A549 (cell line): ENCODE measurements at regions of chr11 and their contacts with region 1.

Region 1: GRCh38 chr11:61516675-61517572 is 8.4 kb downstream of the LRRC10B start:
- DNase-seq: peak; percentile 28 to 86
- ATAC-seq: peak in 1 of 2 experiments; percentile 81; a peak in 3 of 6 replicates
- H3K4me3 ChIP-seq: no peak overlapping the region
- H3K27ac ChIP-seq: no peak overlapping the region
- H3K4me1 ChIP-seq: peaks cover 6% of the 10 kb centered on the region; the same call in 1 of the 3 replicates
- CTCF ChIP-seq: peak; percentile 93
- EP300 ChIP-seq: no peak
- POLR2A ChIP-seq: no peak
- RAD21 ChIP-seq: peak; percentile 83 to 86

Region 2: GRCh38 chr11:61446211-61446651 is 70.7 kb before region 1 on chr11:
- CTCF ChIA-PET with region 1: interaction called, 128 read pairs
- POLR2A ChIA-PET with region 1: no interaction called
- DNase-seq: peak; percentile 90
- ATAC-seq: peak; percentile 98 to 99
- H3K4me3 ChIP-seq: no peak overlapping the region
- H3K27ac ChIP-seq: peak overlapping the region; percentile 44 to 79; a peak in 5 of 6 replicates
- H3K4me1 ChIP-seq: peaks cover 12% of the 10 kb centered on the region
- CTCF ChIP-seq: peak; percentile 91
- EP300 ChIP-seq: no peak
- POLR2A ChIP-seq: no peak
- RAD21 ChIP-seq: peak; percentile 71 to 77

Region 3: DNA sequence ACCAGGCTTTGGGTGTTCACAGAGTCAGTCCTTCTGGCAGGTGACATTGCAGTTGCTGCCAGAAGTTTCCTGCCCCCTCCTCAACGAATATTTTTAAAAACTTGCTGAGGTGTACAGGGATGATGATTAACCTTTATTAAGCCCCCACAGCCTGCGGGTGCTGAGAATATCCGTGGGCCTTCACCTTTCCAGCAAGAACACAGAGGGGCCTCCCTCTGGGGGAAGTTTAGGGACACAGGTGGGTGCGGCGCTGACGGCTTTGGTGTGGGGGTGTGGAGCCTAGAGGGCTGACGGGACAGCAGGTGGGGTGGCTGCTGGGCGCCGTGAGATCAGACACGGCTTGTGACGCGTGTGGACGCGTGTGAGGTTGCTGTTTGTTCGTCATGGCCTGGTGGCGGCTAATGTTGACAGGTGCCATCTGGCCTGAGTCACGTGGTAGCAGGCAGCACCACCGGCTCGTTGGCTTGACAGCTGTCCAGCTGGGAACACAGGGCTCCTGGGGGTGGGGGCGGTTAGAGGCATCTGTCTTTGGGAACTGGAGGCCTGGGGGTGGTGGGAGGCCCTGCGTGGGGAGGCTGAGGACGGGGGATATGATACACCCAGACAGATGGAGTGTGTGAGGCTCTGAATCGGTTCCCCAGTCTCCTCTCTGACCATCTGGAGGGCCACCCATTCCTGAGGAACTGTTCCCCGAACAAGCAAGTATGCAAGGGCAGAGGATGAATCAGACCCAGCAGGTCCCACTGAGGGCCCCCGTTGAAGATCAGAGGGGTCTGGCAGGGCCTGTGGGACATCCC is 20.9 kb before region 1 on chr11:
- CTCF ChIA-PET with region 1: interaction called, 109 read pairs
- POLR2A ChIA-PET with region 1: no interaction called
- DNase-seq: no peak
- ATAC-seq: no peak
- H3K4me3 ChIP-seq: no peak overlapping the region
- H3K27ac ChIP-seq: no peak overlapping the region
- H3K4me1 ChIP-seq: no peaks in the 10 kb centered on the region
- CTCF ChIP-seq: no peak
- EP300 ChIP-seq: no peak
- POLR2A ChIP-seq: no peak
- RAD21 ChIP-seq: no peak

Region 4: GRCh38 chr11:61541598-61541997 is 24.7 kb after region 1 on chr11:
- CTCF ChIA-PET with region 1: interaction called, 21 read pairs
- POLR2A ChIA-PET with region 1: no interaction called
- DNase-seq: peak; percentile 26 to 36
- ATAC-seq: peak; percentile 16 to 52; a peak in 3 of 6 replicates
- H3K4me3 ChIP-seq: no peak overlapping the region
- H3K27ac ChIP-seq: peak overlapping the region in 1 of 2 experiments; percentile 75; a peak in 3 of 6 replicates
- H3K4me1 ChIP-seq: peaks cover 35% of the 10 kb centered on the region
- CTCF ChIP-seq: no peak
- EP300 ChIP-seq: no peak
- POLR2A ChIP-seq: no peak
- RAD21 ChIP-seq: no peak

Region 5: GRCh38 chr11:61555051-61555969 is 38.4 kb after region 1 on chr11:
- CTCF ChIA-PET with region 1: interaction called, 15 read pairs
- POLR2A ChIA-PET with region 1: no interaction called
- DNase-seq: peak in 1 of 2 experiments; percentile 35
- ATAC-seq: peak; percentile 4 to 56; a peak in 3 of 6 replicates
- H3K4me3 ChIP-seq: 0 out of 3 replicates have a peak overlapping the region, but pooled peaks have one; percentile 2
- H3K27ac ChIP-seq: no peak overlapping the region
- H3K4me1 ChIP-seq: peaks cover 14% of the 10 kb centered on the region
- CTCF ChIP-seq: no peak
- EP300 ChIP-seq: no peak
- POLR2A ChIP-seq: no peak
- RAD21 ChIP-seq: no peak

Region 6: GRCh38 chr11:61627567-61628445 is 110.9 kb after region 1 on chr11:
- CTCF ChIA-PET with region 1: interaction called, 28 read pairs
- POLR2A ChIA-PET with region 1: no interaction called
- DNase-seq: peak; percentile 65 to 67
- ATAC-seq: peak; percentile 81 to 95
- H3K4me3 ChIP-seq: no peak overlapping the region
- H3K27ac ChIP-seq: no peak overlapping the region
- H3K4me1 ChIP-seq: no peaks in the 10 kb centered on the region
- CTCF ChIP-seq: peak; percentile 75
- EP300 ChIP-seq: no peak
- POLR2A ChIP-seq: no peak
- RAD21 ChIP-seq: peak; percentile 68 to 72

Region 7: GRCh38 chr11:61752117-61752924 is 235.4 kb after region 1 on chr11 and contains the start of gene MYRF:
- CTCF ChIA-PET with region 1: no interaction called
- POLR2A ChIA-PET with region 1: no interaction called
- DNase-seq: peak in 1 of 2 experiments; percentile 50
- ATAC-seq: peak; percentile 61 to 63
- H3K4me3 ChIP-seq: peak within 1 kb of the TSS; percentile 92
- H3K27ac ChIP-seq: peak within 1 kb of the TSS; percentile 95 to 99
- H3K4me1 ChIP-seq: peaks cover 55% of the 10 kb centered on the region
- CTCF ChIP-seq: peak; percentile 98
- EP300 ChIP-seq: no peak
- POLR2A ChIP-seq: peak; percentile 47; the same call in 1 of the 2 replicates
- RAD21 ChIP-seq: peak; percentile 21 to 48; a peak in 4 of 5 replicates
- polyA plus RNA-seq, gene MYRF: 14.7 and 28.4 TPM in 2 replicates